HCT116 (cell line): ENCODE measurements at regions of chr5 and their contacts with region 1.

Region 1: DNA sequence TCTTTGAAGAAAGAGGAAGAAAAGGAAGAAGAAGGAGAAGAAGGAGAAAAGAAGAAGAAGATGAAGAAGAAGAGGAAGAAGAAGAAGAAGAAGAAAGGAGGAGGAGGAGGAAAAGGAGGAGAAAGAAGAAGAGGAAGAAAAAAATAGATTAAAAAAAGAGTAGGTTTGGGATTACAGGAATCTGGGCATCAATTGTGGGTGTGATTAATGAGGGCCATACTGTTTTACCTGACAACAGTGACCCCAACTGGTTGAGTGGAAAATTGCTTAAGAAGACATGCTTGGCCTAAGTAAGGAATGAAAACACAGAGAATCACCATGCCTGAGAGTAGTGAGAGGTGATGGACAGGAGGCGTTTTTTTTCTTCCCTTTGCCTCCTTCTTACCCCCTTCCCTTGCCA is 114.6 kb downstream of the FAM170A start:
- DNase-seq: peak; percentile 59
- ATAC-seq: peak; percentile 86
- H3K4me3 ChIP-seq: no peak overlapping the region
- H3K27ac ChIP-seq: no peak overlapping the region
- H3K4me1 ChIP-seq: no peaks in the 10 kb centered on the region
- H3K27me3 ChIP-seq: no peaks in the 10 kb centered on the region
- CTCF ChIP-seq: peak; percentile 34 to 72 (median 54); a peak in 4 of 6 replicates
- POLR2A ChIP-seq: no peak
- RAD21 ChIP-seq: peak; percentile 67

Region 2: GRCh38 chr5:118902656-118903438 is 841.1 kb before region 1 on chr5:
- CTCF ChIA-PET with region 1: no interaction called
- POLR2A ChIA-PET with region 1: no interaction called
- RAD21 ChIA-PET with region 1: no interaction called
- intact Hi-C with region 1: no loop called
- DNase-seq: no peak
- ATAC-seq: no peak
- H3K4me3 ChIP-seq: no peak overlapping the region
- H3K27ac ChIP-seq: no peak overlapping the region
- H3K4me1 ChIP-seq: no peaks in the 10 kb centered on the region
- H3K27me3 ChIP-seq: no peaks in the 10 kb centered on the region
- CTCF ChIP-seq: no peak
- POLR2A ChIP-seq: no peak
- RAD21 ChIP-seq: no peak

Region 3: GRCh38 chr5:119578937-119579336 is 165.0 kb before region 1 on chr5:
- CTCF ChIA-PET with region 1: no interaction called
- POLR2A ChIA-PET with region 1: no interaction called
- RAD21 ChIA-PET with region 1: no interaction called
- intact Hi-C with region 1: loop called (anchors 2 kb)
- DNase-seq: peak; percentile 70
- ATAC-seq: peak; percentile 100
- H3K4me3 ChIP-seq: no peak overlapping the region
- H3K27ac ChIP-seq: no peak overlapping the region
- H3K4me1 ChIP-seq: no peaks in the 10 kb centered on the region
- H3K27me3 ChIP-seq: no peaks in the 10 kb centered on the region
- CTCF ChIP-seq: peak; percentile 28 to 62 (median 43); a peak in 5 of 6 replicates
- POLR2A ChIP-seq: no peak
- RAD21 ChIP-seq: peak; percentile 50

Region 4: GRCh38 chr5:120007598-120007997 is 263.7 kb after region 1 on chr5:
- CTCF ChIA-PET with region 1: no interaction called
- POLR2A ChIA-PET with region 1: no interaction called
- RAD21 ChIA-PET with region 1: no interaction called
- intact Hi-C with region 1: no loop called
- DNase-seq: no peak
- ATAC-seq: no peak
- H3K4me3 ChIP-seq: no peak overlapping the region
- H3K27ac ChIP-seq: no peak overlapping the region
- H3K4me1 ChIP-seq: no peaks in the 10 kb centered on the region
- H3K27me3 ChIP-seq: no peaks in the 10 kb centered on the region
- CTCF ChIP-seq: no peak
- POLR2A ChIP-seq: no peak
- RAD21 ChIP-seq: no peak